Activated CD4-positive, alpha-beta memory T cell treated with anti-CD3 and anti-CD28 coated beads, Interleukin-2, amount 10 ng/mL, durations not matched to agents 7 days and 5 days (primary cell): ENCODE measurements at regions of chr3 and their contacts with region 1.

Region 1: DNA sequence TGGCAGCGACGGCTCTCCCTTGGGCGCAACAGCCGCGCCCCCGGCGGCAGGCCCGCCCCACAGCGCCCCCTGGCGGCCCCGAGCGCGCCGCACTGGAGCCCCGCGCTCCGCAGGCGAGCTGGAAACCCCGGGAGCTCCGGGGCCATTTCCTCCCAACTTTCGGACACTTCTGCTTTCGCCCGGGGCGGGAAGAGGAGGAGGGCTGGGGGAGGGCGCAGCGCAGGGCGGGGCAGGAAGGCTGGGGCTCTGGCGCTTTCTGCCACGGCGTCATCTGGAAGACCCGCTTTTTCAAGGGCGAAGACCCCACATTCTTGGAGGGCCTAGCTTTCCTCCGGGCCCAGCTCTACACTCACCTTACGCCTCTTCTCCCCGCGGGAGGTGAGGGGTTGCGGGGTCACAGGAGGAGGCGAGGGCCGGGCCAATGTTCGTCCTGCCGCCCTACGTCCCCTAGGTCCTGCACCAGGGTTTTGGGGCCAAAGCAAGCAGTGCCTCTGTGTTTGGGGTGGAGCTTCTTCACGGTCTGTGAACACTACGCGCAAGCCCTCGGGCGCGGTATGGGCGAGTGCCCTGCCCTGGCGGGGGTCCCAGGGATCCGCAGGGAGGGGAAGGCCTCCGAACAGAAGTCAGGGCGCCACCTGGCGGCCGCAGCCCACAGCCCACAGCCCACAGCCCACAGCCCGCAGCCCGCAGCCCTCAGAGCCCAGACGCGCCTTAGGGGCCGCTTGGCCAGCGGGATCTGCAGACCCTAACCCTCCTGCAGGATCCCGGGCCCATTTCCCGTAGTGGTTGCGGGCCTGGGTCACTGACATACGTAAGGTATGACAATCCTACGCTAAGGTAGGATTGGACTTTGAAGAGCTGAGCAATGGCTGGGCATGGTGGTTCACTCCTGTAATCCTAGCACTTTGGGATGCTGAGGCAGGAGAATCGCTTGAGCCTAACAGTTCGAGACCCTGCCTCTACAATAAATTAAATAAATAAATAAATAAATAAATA is 31.1 kb downstream of the FOXL2 start:
- DNase-seq: peak; percentile 80
- H3K4me3 Mint-ChIP-seq: peak overlapping the region; percentile 74
- H3K27ac Mint-ChIP-seq: peak overlapping the region; percentile 56
- H3K4me1 Mint-ChIP-seq: peaks cover 9% of the 10 kb centered on the region
- H3K27me3 Mint-ChIP-seq: peaks cover 3% of the 10 kb centered on the region

Region 2: DNA sequence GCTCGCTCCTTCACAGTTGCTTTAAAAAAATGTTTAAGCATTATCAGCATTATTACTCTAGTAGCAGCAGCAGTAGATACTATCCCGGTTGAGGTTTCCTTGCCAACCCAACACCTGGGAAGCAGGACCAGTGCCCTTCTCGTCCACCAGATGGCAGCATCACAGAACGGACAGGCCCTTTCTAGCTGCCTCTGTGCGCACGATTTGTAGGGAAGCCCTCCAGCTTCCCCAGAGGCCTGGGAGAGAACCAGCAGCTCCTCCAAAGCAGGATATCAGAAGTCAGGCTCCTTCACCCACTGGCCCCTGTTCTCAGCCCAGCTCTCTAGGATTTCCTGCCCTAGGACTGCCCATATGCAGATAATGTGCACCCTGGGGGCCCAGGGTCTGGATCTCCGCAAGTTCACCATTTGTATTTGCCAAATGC is 498.2 kb before region 1 on chr3:
- CTCF ChIA-PET with region 1: interaction called, 15 read pairs
- POLR2A ChIA-PET with region 1: no interaction called
- DNase-seq: peak; percentile 66
- H3K4me3 Mint-ChIP-seq: no peak overlapping the region
- H3K27ac Mint-ChIP-seq: no peak overlapping the region
- H3K4me1 Mint-ChIP-seq: peaks cover 1% of the 10 kb centered on the region
- H3K27me3 Mint-ChIP-seq: peaks cover 20% of the 10 kb centered on the region

Region 3: DNA sequence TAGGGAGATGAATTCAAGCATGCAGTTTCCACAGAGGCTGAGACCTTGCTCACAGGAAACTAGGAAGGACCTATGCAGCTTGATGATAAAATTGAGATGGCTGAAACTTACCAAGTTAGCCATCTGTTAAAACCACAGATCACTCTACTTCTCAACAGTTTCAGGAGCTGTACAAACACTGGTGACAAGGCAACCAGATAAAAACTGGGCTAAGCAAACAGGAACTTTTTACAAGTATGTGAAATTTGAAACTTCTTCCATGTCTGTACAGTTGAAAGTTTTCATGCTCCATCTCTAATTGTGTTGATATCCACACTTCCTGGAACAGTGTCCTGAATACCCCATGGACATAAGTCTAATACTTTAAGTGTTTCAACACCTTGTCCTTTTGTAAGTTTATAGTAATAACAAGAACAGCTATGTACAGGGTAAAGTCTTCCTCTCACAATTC is 229.0 kb before region 1 on chr3:
- CTCF ChIA-PET with region 1: interaction called, 405 read pairs
- POLR2A ChIA-PET with region 1: no interaction called
- DNase-seq: no peak
- H3K4me3 Mint-ChIP-seq: no peak overlapping the region
- H3K27ac Mint-ChIP-seq: no peak overlapping the region
- H3K4me1 Mint-ChIP-seq: peaks cover 10% of the 10 kb centered on the region
- H3K27me3 Mint-ChIP-seq: no peaks in the 10 kb centered on the region

Region 4: DNA sequence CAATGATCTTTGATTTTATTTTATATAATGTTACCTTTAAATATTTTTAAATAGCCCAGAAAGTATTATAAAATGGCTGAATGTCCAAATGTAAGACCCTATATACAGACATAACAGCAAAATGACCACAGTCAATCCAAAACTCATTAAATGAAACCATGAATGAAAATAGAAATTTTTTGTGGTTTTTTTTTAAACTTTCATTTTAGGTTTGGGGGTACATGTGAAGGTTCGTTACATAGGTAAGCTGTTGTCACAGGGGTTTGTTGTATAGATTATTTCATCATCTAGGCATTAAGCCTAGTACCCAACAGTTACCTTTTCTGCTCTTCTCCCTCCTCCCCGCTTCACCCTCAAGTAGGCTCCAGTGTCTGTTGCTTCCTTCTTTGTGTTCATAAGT is 198.5 kb before region 1 on chr3:
- CTCF ChIA-PET with region 1: interaction called, 30 read pairs
- POLR2A ChIA-PET with region 1: no interaction called
- DNase-seq: no peak
- H3K4me3 Mint-ChIP-seq: no peak overlapping the region
- H3K27ac Mint-ChIP-seq: no peak overlapping the region
- H3K4me1 Mint-ChIP-seq: peaks cover 17% of the 10 kb centered on the region
- H3K27me3 Mint-ChIP-seq: no peaks in the 10 kb centered on the region

Region 5: DNA sequence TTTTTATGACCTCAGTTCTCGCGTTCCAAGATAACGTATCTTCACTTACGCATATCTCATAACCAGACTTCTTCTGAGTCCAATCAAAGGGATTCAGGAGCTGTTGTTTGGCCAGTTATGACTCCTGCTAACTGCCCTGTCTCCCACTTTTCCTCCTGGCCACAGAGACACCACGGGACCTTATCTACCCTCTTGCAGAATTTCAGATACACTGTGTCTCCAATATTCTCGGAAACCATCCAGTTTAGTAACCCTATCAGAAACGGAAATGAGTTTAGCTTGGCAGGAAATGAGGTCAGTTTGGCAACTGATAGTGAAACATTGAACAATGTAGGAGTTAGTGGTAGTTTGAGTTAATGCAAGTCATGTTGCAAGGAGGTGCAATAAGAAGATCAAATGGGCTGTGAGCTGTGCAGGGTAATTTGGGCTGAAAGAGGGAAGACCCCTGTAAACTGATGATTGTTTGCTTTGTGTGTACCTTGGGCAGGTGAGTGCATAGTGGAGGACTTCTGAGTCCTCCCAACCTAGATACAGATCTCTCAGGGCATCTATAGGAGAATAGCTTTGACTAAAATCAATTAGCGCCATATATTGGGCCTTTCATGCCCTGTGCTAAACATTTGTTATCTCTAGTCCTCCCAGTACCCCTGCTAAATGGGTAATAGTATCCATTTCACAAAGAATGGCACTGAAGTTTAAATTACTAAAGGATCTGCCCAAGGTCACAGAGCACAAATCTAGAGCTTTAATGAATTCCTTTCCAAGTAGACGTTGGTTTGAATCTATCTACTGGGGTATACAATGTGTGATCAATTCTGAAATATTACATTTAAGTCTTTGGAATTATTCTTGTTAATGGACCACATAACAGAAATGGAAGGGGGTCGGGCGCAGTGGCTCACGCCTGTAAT is 39.8 kb before region 1 on chr3:
- CTCF ChIA-PET with region 1: interaction called, 12 read pairs
- POLR2A ChIA-PET with region 1: no interaction called
- DNase-seq: no peak
- H3K4me3 Mint-ChIP-seq: no peak overlapping the region
- H3K27ac Mint-ChIP-seq: peak overlapping the region; percentile 18
- H3K4me1 Mint-ChIP-seq: peaks cover 14% of the 10 kb centered on the region
- H3K27me3 Mint-ChIP-seq: no peaks in the 10 kb centered on the region

Region 6: DNA sequence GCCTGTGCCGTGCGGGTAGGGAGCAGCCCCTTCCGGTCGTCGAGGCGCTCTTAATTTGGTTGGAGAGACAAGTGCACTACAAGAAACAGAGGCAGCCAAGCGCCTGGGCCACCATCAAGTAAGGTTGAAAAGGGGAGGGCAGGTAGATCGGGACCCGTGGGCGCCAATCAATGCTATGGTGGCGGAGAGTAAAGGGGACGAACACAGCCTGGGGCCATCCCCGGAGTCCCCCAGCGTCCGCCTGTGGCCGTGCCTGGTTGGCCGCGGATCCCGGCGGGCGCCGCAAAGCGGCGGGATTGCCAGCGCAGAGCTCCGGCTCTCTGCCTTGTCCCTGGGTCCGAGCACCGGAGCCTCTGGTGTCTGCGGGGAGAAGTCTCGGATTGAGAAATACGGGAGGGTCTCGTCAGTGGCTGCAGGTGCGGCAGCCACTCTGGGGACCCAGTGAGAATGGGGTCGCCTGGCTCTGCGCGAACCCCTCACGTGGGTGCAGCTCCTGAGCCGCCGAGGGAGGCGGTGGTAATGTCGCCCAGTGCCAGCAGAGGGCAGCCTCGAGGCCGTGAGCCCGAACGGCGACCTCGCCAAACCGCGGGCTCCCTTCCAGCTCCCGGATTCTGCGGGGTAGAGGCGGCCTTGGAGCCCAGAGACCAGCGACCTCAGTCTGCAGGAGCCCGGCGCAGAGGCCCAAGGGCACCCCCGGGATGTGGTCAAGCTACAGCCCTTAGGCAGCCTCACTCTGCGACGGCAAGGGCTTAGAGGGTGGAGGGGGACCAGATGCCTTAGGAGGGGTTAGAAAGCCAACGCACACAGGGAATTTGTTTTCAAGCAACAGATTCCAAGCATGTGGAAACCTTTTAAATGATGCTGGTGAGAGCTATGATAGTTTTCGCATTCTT is 20.3 kb after region 1 on chr3:
- CTCF ChIA-PET with region 1: interaction called, 54 read pairs
- POLR2A ChIA-PET with region 1: interaction called, 4 read pairs
- DNase-seq: peak; percentile 67
- H3K4me3 Mint-ChIP-seq: peak overlapping the region; percentile 46
- H3K27ac Mint-ChIP-seq: peak overlapping the region; percentile 35
- H3K4me1 Mint-ChIP-seq: peaks cover 26% of the 10 kb centered on the region
- H3K27me3 Mint-ChIP-seq: peaks cover 77% of the 10 kb centered on the region

Region 7: GRCh38 chr3:139044366-139045210 is 128.8 kb after region 1 on chr3 and contains the start of gene PRR23C:
- CTCF ChIA-PET with region 1: no interaction called
- POLR2A ChIA-PET with region 1: no interaction called
- DNase-seq: no peak
- H3K4me3 Mint-ChIP-seq: no peak within 1 kb of the TSS
- H3K27ac Mint-ChIP-seq: no peak within 1 kb of the TSS
- H3K4me1 Mint-ChIP-seq: no peaks in the 10 kb centered on the region
- H3K27me3 Mint-ChIP-seq: no peaks in the 10 kb centered on the region
- total RNA-seq, gene PRR23C: not detected

Region 8: GRCh38 chr3:139074565-139075115 is 158.8 kb after region 1 on chr3:
- CTCF ChIA-PET with region 1: no interaction called
- POLR2A ChIA-PET with region 1: no interaction called
- DNase-seq: no peak
- H3K4me3 Mint-ChIP-seq: no peak overlapping the region
- H3K27ac Mint-ChIP-seq: no peak overlapping the region
- H3K4me1 Mint-ChIP-seq: peaks cover 3% of the 10 kb centered on the region
- H3K27me3 Mint-ChIP-seq: peaks cover 8% of the 10 kb centered on the region